ENCODE measurements at regions of chr5 and their contacts with region 1.

Region 1: DNA sequence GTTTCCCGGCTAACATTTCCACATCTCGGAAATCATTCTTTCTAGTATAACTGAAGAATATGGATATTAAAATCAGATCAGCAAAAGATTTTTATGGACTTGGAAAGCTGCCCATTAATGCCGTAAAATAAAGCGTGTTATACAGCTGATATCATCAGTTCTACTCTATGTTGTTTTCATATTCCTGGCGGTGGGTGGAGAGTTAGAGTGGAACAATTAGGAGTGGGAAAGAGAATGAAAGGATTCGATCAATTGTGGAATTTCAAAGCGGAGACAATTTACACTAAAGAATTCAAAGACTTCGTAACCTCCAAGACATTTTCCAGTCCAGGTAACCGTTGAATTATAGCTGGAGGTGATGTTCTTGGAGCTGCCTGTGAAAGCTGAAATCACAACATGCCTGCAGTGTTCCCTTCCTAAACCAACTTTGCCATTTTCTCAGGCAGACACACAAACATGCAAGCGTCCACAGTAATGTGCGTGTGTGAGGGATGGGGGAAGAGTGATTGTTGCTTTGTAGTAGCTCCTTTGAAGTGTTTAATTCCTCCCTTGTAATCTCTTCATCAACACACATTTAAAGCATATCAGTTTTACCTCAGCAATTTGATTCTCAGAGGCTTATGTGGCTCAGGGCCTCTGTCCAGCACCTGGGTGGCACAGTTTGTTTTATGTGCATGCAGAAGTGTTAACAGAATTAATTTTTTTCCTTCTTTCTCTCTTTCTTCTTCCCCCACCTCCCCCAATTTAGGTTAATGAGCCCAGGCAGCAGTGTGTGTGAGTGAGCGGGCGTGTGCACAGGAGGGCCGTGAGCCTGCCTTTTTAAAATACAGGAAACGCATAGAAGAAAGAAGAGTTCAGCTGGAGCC is 544.1 kb downstream of the RAB3C start:
- DNase-seq: no peak
- H3K4me3 Mint-ChIP-seq: no peak overlapping the region
- H3K27ac Mint-ChIP-seq: no peak overlapping the region
- H3K4me1 Mint-ChIP-seq: peaks cover 14% of the 10 kb centered on the region
- H3K27me3 Mint-ChIP-seq: no peaks in the 10 kb centered on the region

Region 2: DNA sequence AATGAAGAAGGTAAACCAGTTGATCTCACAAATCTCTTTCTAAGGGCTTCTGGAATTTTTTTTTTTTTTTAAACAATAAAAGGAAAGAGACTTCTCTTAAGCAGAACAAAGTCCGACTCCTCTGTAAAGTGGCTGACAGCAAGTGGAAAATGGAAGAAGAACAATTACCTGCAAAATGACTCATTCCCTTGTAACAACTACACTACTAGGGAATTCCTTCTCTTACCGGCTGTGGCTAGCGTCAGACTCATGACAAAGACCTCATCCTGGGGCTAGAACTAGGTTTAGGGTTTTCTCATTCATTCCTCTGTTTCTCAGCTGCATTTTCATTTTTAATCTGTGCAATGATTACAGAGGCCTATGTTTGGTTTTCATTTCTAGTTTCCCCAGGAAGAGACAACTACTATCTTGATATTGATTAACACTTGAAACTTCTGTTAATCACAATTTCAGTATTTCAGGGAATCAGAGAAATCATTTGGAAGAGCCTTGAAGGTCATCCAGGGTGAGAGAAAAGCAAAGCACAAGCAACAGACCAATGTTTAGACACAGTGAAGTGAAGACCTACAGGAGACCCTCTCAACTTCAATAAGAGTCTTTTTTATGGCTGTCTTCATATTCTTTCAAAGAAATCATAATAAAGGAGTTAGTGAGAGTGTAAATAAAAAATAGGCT is 106.2 kb before region 1 on chr5:
- intact Hi-C with region 1: loop called (anchors 1 kb)
- DNase-seq: no peak
- H3K4me3 Mint-ChIP-seq: peak overlapping the region; percentile 15
- H3K27ac Mint-ChIP-seq: peak overlapping the region; percentile 94
- H3K4me1 Mint-ChIP-seq: peaks cover 75% of the 10 kb centered on the region
- H3K27me3 Mint-ChIP-seq: no peaks in the 10 kb centered on the region

Region 3: DNA sequence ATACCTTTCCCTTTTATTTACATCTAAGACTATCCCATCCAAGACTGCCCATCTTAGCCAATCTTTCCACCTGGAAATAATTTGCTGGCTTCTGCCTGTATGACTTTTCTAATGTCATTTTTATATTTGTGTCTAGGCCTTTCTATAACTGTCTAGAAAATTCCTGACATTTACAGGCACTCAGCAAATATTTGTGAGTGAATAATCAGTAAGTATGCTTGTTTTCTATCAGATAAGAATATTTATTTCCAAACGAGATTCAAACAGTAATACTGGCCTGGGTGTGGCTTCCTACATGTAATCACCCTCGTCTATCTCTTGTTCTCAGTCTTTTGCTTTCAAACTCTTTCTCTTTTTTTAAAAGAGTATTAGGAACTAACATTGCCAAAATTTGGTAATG is 77.9 kb before region 1 on chr5:
- intact Hi-C with region 1: no loop called
- DNase-seq: no peak
- H3K4me3 Mint-ChIP-seq: no peak overlapping the region
- H3K27ac Mint-ChIP-seq: no peak overlapping the region
- H3K4me1 Mint-ChIP-seq: peaks cover 14% of the 10 kb centered on the region
- H3K27me3 Mint-ChIP-seq: no peaks in the 10 kb centered on the region

Region 4: GRCh38 chr5:59152701-59153245 is 25.8 kb after region 1 on chr5:
- intact Hi-C with region 1: loop called (anchors 1 kb)
- DNase-seq: peak; percentile 14
- H3K4me3 Mint-ChIP-seq: peak overlapping the region; percentile 58
- H3K27ac Mint-ChIP-seq: no peak overlapping the region
- H3K4me1 Mint-ChIP-seq: no peaks in the 10 kb centered on the region
- H3K27me3 Mint-ChIP-seq: no peaks in the 10 kb centered on the region

Region 5: GRCh38 chr5:59174248-59174844 is 47.4 kb after region 1 on chr5:
- intact Hi-C with region 1: loop called (anchors 1 kb)
- DNase-seq: no peak
- H3K4me3 Mint-ChIP-seq: no peak overlapping the region
- H3K27ac Mint-ChIP-seq: no peak overlapping the region
- H3K4me1 Mint-ChIP-seq: peaks cover 53% of the 10 kb centered on the region
- H3K27me3 Mint-ChIP-seq: no peaks in the 10 kb centered on the region